ENCODE measurements at regions of chr2 and their contacts with region 1.

Region 1: GRCh38 chr2:230411570-230412370 is 4.2 kb upstream of the SP100 start:
- DNase-seq: peak; percentile 80
- H3K4me3 ChIP-seq: peak overlapping the region; percentile 61 to 81 (median 70)
- H3K27ac ChIP-seq: peak overlapping the region; percentile 88 to 96 (median 93)
- H3K4me1 ChIP-seq: peaks cover 0 to 27% (median 23%) of the 10 kb centered on the region in 4 donors
- H3K27me3 ChIP-seq: no peaks in the 10 kb centered on the region
- CTCF ChIP-seq: no peak
- EP300 ChIP-seq: no peak
- POLR2A ChIP-seq: peak in 1 of 2 donors; percentile 37

Region 2: DNA sequence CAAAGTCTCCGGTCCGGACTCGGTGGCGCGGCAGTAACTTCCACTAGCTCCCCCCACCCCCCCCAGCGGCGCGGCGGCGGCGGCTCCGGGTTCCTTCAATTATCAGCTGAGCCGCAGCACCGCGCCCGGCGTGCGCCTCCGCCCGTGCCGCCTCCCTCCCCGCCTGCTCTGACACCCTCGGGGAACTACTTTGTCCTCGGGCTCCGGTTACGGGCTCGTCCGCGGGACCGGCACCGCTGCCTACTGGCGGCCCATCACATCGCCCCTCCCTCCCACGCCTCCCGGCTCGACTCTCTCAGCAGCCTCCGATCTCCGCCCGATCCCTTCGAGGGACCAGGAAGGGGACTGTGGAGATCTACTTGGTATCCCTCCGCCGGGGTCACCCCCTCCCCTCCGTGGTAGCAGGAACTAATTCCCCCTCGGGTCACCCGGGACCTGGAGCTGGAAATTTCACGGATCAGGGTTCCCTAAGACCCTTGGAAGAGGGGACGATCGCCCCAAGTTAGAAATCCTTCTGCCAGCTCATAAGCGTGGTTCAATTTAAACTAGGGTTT is 489.8 kb before region 1 on chr2 and contains the start of gene TRIP12:
- intact Hi-C with region 1: loop called (anchors 10 kb)
- DNase-seq: peak; percentile 97
- H3K4me3 ChIP-seq: peak within 1 kb of the TSS; percentile 85 to 95 (median 92)
- H3K27ac ChIP-seq: peak within 1 kb of the TSS; percentile 99 to 100 (median 100)
- H3K4me1 ChIP-seq: peaks cover 0 to 34% (median 30%) of the 10 kb centered on the region in 4 donors
- H3K27me3 ChIP-seq: no peaks in the 10 kb centered on the region
- CTCF ChIP-seq: no peak
- EP300 ChIP-seq: peak in 1 of 4 donors; percentile 23
- POLR2A ChIP-seq: peak in 1 of 2 donors; percentile 29
- total RNA-seq, gene TRIP12: 144 to 168 (median 159) TPM

Region 3: DNA sequence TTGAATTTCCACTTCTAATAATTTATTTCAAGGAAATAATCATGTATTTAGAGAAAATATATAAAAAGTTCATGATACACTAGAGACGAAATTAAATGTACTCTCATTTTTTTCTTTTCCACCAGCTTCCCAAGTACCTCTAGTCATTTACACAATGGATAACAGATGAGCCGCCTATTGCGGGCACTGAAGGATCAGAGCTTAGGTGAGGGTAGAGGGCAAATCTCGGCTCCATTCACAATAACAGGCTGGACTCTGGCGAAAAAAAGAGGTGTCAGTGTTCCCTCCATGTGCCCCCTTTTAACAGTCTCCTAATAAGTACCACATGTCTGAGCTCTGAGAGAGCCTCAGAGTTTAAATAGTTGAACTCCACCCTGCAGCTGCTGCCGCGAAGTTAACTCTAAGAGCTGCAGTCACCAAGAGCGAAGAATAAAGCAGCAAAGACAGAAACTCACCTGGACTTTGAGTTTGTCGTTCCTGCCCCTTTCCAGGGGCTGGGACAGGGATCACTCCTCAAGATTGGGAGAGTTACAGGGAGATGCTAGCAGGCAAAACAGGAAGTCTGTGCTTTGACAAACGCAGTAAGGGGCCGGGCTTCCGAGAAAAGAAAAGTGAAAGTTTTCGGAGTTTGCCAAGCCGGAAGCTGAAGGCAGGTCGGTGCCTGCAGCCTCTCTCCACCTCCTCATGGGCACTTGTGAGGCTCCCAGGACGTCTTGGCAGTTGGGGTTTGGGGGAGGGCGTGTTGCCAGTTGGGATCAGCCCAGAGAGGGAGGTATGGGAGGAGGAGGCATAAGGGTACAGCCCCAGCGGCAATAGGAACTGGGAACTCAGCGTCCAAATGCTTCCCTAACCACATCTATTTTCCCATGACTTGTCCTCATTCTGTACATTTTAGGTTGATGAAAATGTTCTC is 192.1 kb before region 1 on chr2 and contains the start of gene SP110:
- intact Hi-C with region 1: loop called (anchors 5 kb)
- DNase-seq: peak; percentile 89
- H3K4me3 ChIP-seq: peak within 1 kb of the TSS; percentile 52 to 66 (median 56)
- H3K27ac ChIP-seq: peak within 1 kb of the TSS; percentile 76 to 80 (median 78)
- H3K4me1 ChIP-seq: peaks cover 0 to 26% (median 19%) of the 10 kb centered on the region in 4 donors
- H3K27me3 ChIP-seq: no peaks in the 10 kb centered on the region
- CTCF ChIP-seq: no peak
- EP300 ChIP-seq: no peak
- POLR2A ChIP-seq: peak in 1 of 2 donors; percentile 9
- total RNA-seq, gene SP110: 15.3 to 22.7 (median 18.9) TPM

Region 4: DNA sequence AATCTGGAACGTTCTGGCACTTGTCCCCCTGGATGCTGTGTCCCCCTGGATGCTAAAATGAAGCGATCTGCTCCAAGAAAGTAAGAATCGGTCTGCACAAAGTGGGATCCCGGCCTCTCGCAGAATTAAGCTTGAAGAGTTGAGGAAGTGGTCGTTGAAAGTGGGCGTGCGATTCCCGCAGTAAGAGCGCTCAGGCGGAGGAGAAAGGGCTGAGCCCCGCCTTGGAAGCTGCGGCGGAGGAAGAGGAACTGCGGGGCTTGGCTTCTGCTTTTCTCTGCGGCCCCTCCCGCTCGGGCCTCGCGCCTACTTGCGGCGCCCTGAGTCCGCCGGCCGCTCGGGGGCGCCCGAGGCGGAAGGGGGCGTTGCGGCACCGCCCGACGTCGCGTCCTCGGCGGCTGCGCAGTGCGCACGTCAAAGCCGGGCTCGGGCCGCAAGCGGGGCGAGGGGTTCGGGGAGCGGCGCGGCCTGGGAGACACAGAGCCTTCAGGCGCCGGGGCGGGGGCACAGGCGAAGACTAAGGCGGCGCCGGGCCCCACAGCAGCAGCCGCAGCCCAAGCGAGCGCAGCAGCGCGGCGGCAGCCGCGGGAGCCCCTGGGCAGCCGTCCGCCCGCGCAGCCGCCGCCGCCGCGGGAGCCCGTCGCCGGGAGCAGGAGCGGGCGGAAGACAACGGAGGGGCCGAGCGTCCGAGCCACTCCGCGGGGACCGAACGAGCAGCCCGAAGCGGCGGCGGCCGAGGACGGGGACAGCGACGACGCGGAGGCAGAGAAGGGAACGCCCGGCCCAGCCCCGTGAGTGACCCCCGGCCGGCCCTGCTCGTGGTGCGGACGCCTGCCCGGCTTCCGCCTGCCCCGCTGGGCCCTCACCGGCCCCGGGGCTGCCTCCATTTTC is 300.9 kb after region 1 on chr2 and contains the start of gene CAB39:
- intact Hi-C with region 1: loop called (anchors 5 kb)
- DNase-seq: peak; percentile 93
- H3K4me3 ChIP-seq: peak within 1 kb of the TSS; percentile 90 to 100 (median 96)
- H3K27ac ChIP-seq: peak within 1 kb of the TSS; percentile 94 to 99 (median 98)
- H3K4me1 ChIP-seq: peaks cover 0 to 45% (median 38%) of the 10 kb centered on the region in 4 donors
- H3K27me3 ChIP-seq: no peaks in the 10 kb centered on the region
- CTCF ChIP-seq: peak in 3 of 4 experiments; percentile 27 to 81 (median 50)
- EP300 ChIP-seq: no peak
- POLR2A ChIP-seq: peak in 1 of 2 donors; percentile 20
- total RNA-seq, gene CAB39: 63.7 to 77.9 (median 73.4) TPM

Region 5: GRCh38 chr2:230798769-230799399 is 387.1 kb after region 1 on chr2:
- intact Hi-C with region 1: loop called (anchors 10 kb)
- DNase-seq: no peak
- H3K4me3 ChIP-seq: no peak overlapping the region
- H3K27ac ChIP-seq: peak overlapping the region in 1 of 4 donors; percentile 85
- H3K4me1 ChIP-seq: peaks cover 0 to 43% (median 31%) of the 10 kb centered on the region in 4 donors
- H3K27me3 ChIP-seq: no peaks in the 10 kb centered on the region
- CTCF ChIP-seq: peak; percentile 11 to 58 (median 49)
- EP300 ChIP-seq: no peak
- POLR2A ChIP-seq: no peak